ENCODE measurements at regions of chr2 and their contacts with region 1.

Region 1: GRCh38 chr2:118855451-118856279 is 8.2 kb upstream of the EN1 start:
- DNase-seq: peak; percentile 67 to 98 (median 85)
- ATAC-seq: peak; percentile 91 to 98 (median 96)
- H3K4me3 ChIP-seq: peak overlapping the region in 3 of 4 donors; percentile 4 to 30 (median 13)
- H3K27ac ChIP-seq: no peak overlapping the region
- H3K4me1 ChIP-seq: peaks cover 0 to 6% (median 0%) of the 10 kb centered on the region in 3 donors
- H3K27me3 ChIP-seq: peaks cover 3 to 72% (median 13%) of the 10 kb centered on the region in 4 donors
- CTCF ChIP-seq: peak; percentile 96 to 99 (median 98)

Region 2: DNA sequence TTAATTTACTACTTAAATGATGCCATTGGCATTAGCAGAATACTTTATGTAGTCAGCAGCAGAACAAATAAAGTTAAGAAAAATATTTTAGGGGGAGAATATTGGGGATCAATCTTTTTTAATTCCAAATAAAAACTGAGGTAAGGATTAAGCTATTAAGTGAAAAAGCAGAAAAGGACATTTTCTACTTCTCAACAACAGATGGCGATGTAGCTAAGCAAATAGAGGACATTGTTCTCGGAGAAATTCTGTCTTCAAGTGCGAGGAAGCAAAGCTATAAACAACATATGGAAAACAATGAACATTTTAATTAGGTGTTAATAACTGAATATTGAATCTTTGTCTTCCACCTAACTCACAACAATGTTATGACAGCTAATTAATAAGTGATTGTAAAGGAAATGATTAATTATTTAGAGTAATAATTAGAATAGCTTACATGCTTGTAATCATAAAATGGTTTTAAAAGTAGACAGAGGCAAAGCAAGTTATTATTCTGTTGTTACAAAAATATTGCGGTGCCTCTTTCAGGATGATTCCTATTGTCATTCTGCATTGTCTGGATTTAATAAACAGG is 808.9 kb before region 1 on chr2:
- intact Hi-C with region 1: loop called in 1 of 3 experiments (anchors 10 kb)
- DNase-seq: no peak
- ATAC-seq: peak; percentile 85 to 95 (median 90)
- H3K4me3 ChIP-seq: peak overlapping the region in 1 of 4 donors; percentile 15
- H3K27ac ChIP-seq: no peak overlapping the region
- H3K4me1 ChIP-seq: peaks cover 0 to 11% (median 4%) of the 10 kb centered on the region in 3 donors
- H3K27me3 ChIP-seq: no peaks in the 10 kb centered on the region
- CTCF ChIP-seq: peak in 2 of 4 donors; percentile 26 to 33

Region 3: DNA sequence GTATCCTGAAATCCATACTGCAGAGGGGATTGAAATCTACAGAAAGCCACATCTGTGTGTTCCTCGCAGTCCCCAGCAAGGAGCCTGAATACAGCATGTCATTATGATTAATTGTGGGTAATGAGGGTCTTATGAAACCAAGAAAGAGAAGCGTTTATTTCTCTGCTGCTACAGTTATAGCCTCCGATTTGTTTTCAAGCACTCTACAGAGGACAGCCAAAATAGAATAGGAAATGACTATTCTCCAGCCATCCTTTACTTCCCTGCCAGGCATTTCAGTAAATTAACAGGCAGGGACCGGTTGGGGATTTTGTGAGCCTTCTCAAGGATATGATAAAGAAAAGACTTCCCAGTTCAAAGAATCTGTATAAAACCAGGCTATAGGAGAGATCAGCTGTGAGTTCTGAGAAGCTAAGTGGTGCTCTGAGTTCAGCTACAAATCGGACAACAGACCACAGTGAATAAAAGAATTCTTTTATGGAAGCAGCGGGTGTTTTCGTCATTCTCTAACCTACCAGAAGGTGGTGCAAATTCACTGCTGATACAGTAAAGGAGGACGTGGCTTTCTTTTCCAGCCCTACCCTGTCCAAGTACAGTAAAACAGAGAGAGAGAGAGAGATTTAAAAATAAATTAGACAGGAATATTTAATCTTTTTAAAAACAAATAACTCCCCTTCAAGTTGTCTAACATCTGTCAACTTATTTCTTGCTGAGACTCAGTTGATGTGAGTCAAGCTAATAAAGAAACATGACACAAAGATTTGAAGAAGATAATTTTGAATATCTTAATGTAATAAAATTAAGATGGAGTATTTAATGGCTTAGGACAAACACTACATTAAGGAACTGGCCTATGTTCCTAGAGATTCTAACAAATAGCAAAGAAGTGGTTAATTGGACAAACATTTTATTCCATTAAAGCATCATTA is 633.7 kb before region 1 on chr2:
- intact Hi-C with region 1: loop called in 2 of 3 experiments (anchors 5 to 10 kb)
- DNase-seq: peak in 3 of 6 donors; percentile 30 to 55 (median 38)
- ATAC-seq: peak; percentile 66 to 96 (median 94)
- H3K4me3 ChIP-seq: no peak overlapping the region
- H3K27ac ChIP-seq: no peak overlapping the region
- H3K4me1 ChIP-seq: peaks cover 0 to 5% (median 0%) of the 10 kb centered on the region in 3 donors
- H3K27me3 ChIP-seq: peaks cover 15 to 39% (median 20%) of the 10 kb centered on the region in 4 donors
- CTCF ChIP-seq: peak; percentile 30 to 50 (median 44)

Region 4: DNA sequence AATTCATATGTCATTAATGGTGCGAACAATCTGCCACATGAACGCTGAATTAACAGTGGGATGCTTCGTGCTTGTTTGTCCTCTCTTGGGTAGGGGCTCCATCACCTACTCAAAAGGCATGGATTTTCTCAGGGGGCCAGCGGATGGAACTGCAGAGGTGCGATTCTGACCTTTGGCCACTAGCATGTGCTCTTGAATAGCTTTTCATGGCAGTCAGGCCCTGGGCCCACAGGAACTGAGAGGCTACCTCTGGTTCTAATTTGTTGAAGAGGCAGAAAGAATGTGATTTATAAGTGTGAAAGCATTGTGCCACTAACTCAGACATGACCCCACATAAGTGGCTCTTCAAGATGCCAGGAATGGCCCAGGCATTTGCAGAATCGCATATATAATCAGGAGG is 484.1 kb before region 1 on chr2:
- intact Hi-C with region 1: loop called in 2 of 3 experiments (anchors 5 to 10 kb)
- DNase-seq: peak in 5 of 6 donors; percentile 15 to 57 (median 42)
- ATAC-seq: peak; percentile 60 to 86 (median 78)
- H3K4me3 ChIP-seq: no peak overlapping the region
- H3K27ac ChIP-seq: no peak overlapping the region
- H3K4me1 ChIP-seq: no peaks in the 10 kb centered on the region
- H3K27me3 ChIP-seq: peaks cover 0 to 3% (median 0%) of the 10 kb centered on the region in 4 donors
- CTCF ChIP-seq: peak; percentile 35 to 51 (median 42)

Region 5: DNA sequence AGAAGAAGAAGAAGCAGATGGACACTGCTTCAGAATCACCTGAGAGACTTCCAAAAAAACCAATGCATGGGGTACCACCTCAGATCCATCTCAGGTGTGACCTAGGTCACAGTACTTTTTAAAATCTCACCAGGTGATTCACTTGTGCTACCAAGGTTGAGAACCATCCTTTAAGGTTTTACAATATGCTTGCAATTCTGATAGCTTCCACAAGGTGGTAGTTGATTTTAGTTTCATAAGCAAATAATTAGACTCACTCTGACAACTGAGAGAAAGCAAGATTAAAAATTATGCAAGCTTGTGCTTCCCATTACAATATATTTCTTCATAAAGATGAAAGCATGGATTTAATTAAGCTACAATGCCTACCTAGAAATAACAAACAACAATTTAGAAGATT is 363.3 kb before region 1 on chr2:
- intact Hi-C with region 1: loop called in 1 of 3 experiments (anchors 10 kb)
- DNase-seq: no peak
- ATAC-seq: peak in 2 of 4 donors; percentile 30 to 32
- H3K4me3 ChIP-seq: no peak overlapping the region
- H3K27ac ChIP-seq: no peak overlapping the region
- H3K4me1 ChIP-seq: no peaks in the 10 kb centered on the region
- H3K27me3 ChIP-seq: no peaks in the 10 kb centered on the region
- CTCF ChIP-seq: peak in 3 of 4 donors; percentile 11 to 27 (median 24)

Region 6: GRCh38 chr2:118752762-118753429 is 102.8 kb before region 1 on chr2:
- intact Hi-C with region 1: no loop called
- DNase-seq: no peak
- ATAC-seq: no peak
- H3K4me3 ChIP-seq: no peak overlapping the region
- H3K27ac ChIP-seq: no peak overlapping the region
- H3K4me1 ChIP-seq: peaks cover 0 to 3% (median 0%) of the 10 kb centered on the region in 3 donors
- H3K27me3 ChIP-seq: no peaks in the 10 kb centered on the region
- CTCF ChIP-seq: no peak

Region 7: DNA sequence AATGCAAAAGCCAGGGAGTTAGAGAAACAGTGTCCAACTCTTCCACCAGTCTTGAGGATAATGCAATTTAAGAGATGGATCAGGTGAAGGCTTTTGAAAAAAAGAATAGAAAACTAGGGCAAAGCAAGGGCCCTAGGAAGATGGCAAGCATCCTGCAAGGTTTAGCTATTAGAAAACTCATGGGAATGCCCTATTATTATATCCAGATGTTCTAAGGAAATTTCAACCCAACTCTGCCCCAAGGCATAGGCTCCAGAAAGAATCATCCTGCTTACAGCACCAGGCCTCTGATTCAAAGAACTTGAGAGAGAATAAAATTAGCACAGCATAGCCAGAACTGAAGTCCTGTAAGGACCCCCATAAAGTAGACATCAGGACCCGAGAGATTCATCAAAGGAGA is 76.3 kb before region 1 on chr2:
- intact Hi-C with region 1: no loop called
- DNase-seq: no peak
- ATAC-seq: no peak
- H3K4me3 ChIP-seq: no peak overlapping the region
- H3K27ac ChIP-seq: no peak overlapping the region
- H3K4me1 ChIP-seq: peaks cover 0 to 5% (median 0%) of the 10 kb centered on the region in 3 donors
- H3K27me3 ChIP-seq: no peaks in the 10 kb centered on the region
- CTCF ChIP-seq: no peak

Region 8: DNA sequence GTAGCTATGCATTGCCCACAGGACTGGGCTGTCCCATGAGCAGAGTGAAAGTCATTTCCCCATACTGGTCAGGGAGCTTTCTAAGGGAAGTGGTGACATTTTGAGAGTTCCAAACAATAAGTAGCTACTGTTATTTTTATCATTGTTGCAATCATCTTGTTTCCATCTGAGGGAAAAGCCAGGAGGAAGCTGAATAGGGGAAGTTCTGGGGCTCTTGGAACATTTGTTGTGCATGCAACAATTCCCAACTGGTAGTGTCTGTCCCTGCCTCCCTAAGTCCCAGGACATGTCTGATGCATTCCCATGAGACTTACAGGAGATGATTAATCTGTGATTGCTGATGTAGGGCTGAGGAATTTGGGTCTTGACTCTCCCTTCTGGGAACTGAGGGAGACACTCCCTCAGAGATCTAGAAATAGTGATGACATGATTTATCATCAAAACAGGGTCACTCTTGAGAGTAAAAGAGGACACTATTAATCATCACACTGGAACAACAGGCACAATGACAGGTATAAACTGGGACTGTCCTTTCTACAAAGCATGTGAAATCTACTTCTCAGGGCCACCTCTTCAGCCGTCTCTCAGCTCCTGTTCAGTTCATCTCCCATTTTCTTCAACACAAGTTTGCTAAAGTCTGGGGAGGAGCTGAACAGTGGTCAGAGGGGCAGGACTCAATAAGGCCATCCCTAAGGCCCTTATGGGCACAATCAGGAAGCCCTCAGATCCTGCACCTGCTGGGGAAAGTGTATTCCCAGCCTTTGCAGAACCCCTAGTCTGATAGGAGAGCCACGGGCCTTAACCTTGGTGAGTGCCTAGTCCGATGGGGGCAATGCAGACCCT is 58.4 kb after region 1 on chr2:
- intact Hi-C with region 1: no loop called
- DNase-seq: no peak
- ATAC-seq: peak in 1 of 4 donors; percentile 41
- H3K4me3 ChIP-seq: no peak overlapping the region
- H3K27ac ChIP-seq: no peak overlapping the region
- H3K4me1 ChIP-seq: no peaks in the 10 kb centered on the region
- H3K27me3 ChIP-seq: no peaks in the 10 kb centered on the region
- CTCF ChIP-seq: no peak

Measured in pancreas (tissue), 10 donors.